ENCODE measurements at regions of chr15 and their contacts with region 1.

Region 1: GRCh38 chr15:29465196-29465595 is 195.6 kb upstream of the NSMCE3 start:
- DNase-seq: no peak
- ATAC-seq: no peak
- H3K4me3 ChIP-seq: no peak overlapping the region
- H3K27ac ChIP-seq: no peak overlapping the region
- H3K4me1 ChIP-seq: no peaks in the 10 kb centered on the region
- H3K27me3 ChIP-seq: peaks cover 0 to 12% of the 10 kb centered on the region in 2 experiments; a peak in 2 of 5 replicates
- CTCF ChIP-seq: no peak
- EP300 ChIP-seq: no peak
- POLR2A ChIP-seq: no peak
- RAD21 ChIP-seq: no peak

Region 2: GRCh38 chr15:29490747-29491471 is 25.7 kb after region 1 on chr15:
- CTCF ChIA-PET with region 1: no interaction called
- POLR2A ChIA-PET with region 1: no interaction called
- in situ Hi-C with region 1: no loop called
- intact Hi-C with region 1: loop called (anchors 2 kb)
- DNase-seq: no peak
- ATAC-seq: no peak
- H3K4me3 ChIP-seq: no peak overlapping the region
- H3K27ac ChIP-seq: no peak overlapping the region
- H3K4me1 ChIP-seq: no peaks in the 10 kb centered on the region
- H3K27me3 ChIP-seq: no peaks in the 10 kb centered on the region
- CTCF ChIP-seq: no peak
- EP300 ChIP-seq: no peak
- POLR2A ChIP-seq: no peak
- RAD21 ChIP-seq: no peak

Measured in HepG2 (cell line).